GM12878 (cell line): ENCODE measurements at regions of chr14 and their contacts with region 1.

Region 1: GRCh38 chr14:67514650-67515385 is 18.3 kb upstream of the PLEKHH1 start:
- DNase-seq: no peak
- ATAC-seq: peak; percentile 68
- H3K4me3 ChIP-seq: peak overlapping the region; percentile 85
- H3K27ac ChIP-seq: no peak overlapping the region
- H3K4me1 ChIP-seq: peaks cover 20% of the 10 kb centered on the region
- H3K27me3 ChIP-seq: no peaks in the 10 kb centered on the region; a peak in 2 of 4 replicates
- CTCF ChIP-seq: no peak
- EP300 ChIP-seq: no peak
- POLR2A ChIP-seq: no peak
- RAD21 ChIP-seq: no peak

Region 2: GRCh38 chr14:67487937-67488893 is 26.6 kb before region 1 on chr14 and contains the start of gene TMEM229B:
- CTCF ChIA-PET with region 1: interaction called, 3 read pairs
- POLR2A ChIA-PET with region 1: no interaction called
- RAD21 ChIA-PET with region 1: interaction called, 7 read pairs
- SMC1A ChIA-PET with region 1: interaction called, 4 read pairs
- in situ Hi-C with region 1: no loop called
- intact Hi-C with region 1: loop called (anchors 2 kb)
- DNase-seq: peak; percentile 94
- ATAC-seq: peak; percentile 95
- H3K4me3 ChIP-seq: peak within 1 kb of the TSS; percentile 50; the same call in 1 of the 2 replicates
- H3K27ac ChIP-seq: peak within 1 kb of the TSS; percentile 96
- H3K4me1 ChIP-seq: peaks cover 47% of the 10 kb centered on the region
- H3K27me3 ChIP-seq: no peaks in the 10 kb centered on the region
- CTCF ChIP-seq: no peak
- EP300 ChIP-seq: peak; percentile 81 to 88
- POLR2A ChIP-seq: no peak; the same call in 1 of the 2 replicates
- RAD21 ChIP-seq: peak; percentile 28; the same call in 1 of the 2 replicates
- polyA plus RNA-seq, gene TMEM229B: 0.24 to 0.32 TPM